CD8-positive, alpha-beta memory T cell (primary cell): ENCODE measurements at regions of chr20 and their contacts with region 1.

Region 1: GRCh38 chr20:53865901-53866794 is 204.2 kb downstream of the BCAS1 start:
- DNase-seq: no peak
- H3K4me3 ChIP-seq: peak overlapping the region; percentile 46
- H3K4me3 Mint-ChIP-seq: peak overlapping the region; percentile 4 to 80 (median 68)
- H3K27ac ChIP-seq: no peak overlapping the region
- H3K27ac Mint-ChIP-seq: peak overlapping the region; percentile 70 to 96 (median 90)
- H3K4me1 ChIP-seq: peaks cover 55% of the 10 kb centered on the region
- H3K4me1 Mint-ChIP-seq: peaks cover 45 to 70% (median 67%) of the 10 kb centered on the region in 3 donors
- H3K27me3 ChIP-seq: no peaks in the 10 kb centered on the region
- H3K27me3 Mint-ChIP-seq: no peaks in the 10 kb centered on the region

Region 2: DNA sequence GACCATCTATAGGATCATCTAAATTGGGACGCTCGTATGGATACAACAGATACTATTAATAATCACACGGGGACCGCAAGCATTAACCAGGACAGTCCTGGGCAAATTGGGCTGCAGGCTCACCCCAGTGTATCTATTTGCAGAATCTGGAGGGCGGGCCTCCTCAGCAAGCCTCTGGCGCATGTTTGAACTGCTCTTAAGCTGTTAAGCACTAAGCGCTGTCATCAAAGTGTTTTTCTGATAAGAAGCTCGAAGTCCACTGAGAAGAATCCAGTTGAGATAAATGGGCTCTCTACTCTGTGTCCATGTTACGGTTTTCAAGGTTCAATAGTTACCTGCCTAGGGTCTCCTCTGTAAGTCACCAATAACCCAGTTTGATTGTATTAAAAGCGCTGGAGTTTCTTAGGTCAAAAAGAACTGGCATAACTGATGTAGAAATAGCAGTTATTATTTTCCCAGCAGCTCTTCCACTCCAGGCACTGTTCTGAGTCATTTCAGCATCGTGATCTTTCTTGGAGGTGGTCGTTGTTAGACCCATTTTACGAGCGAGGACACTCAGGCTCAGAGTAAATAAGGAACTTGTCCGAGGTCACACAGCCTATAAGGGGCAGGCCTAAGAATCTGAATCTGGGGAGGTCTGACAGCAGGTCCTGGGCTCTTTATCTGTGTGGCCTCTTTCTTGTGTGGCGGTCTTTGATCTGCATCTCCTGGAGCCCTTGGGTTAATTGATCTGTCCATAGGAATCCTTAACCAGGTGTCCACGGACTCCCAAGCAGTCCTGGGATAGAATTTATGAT is 65.1 kb before region 1 on chr20:
- CTCF ChIA-PET with region 1: no interaction called
- POLR2A ChIA-PET with region 1: no interaction called
- DNase-seq: no peak
- H3K4me3 ChIP-seq: no peak overlapping the region
- H3K4me3 Mint-ChIP-seq: no peak overlapping the region
- H3K27ac ChIP-seq: no peak overlapping the region
- H3K27ac Mint-ChIP-seq: peak overlapping the region in 2 of 8 donors; percentile 19 to 77
- H3K4me1 ChIP-seq: no peaks in the 10 kb centered on the region
- H3K4me1 Mint-ChIP-seq: no peaks in the 10 kb centered on the region
- H3K27me3 ChIP-seq: no peaks in the 10 kb centered on the region
- H3K27me3 Mint-ChIP-seq: no peaks in the 10 kb centered on the region

Region 3: GRCh38 chr20:53839423-53840176 is 26.5 kb before region 1 on chr20:
- CTCF ChIA-PET with region 1: interaction called, 11 read pairs
- POLR2A ChIA-PET with region 1: interaction called, 5 read pairs
- DNase-seq: peak; percentile 39 to 86 (median 75)
- H3K4me3 ChIP-seq: no peak overlapping the region
- H3K4me3 Mint-ChIP-seq: peak overlapping the region; percentile 28 to 89 (median 75)
- H3K27ac ChIP-seq: no peak overlapping the region
- H3K27ac Mint-ChIP-seq: peak overlapping the region; percentile 87 to 100 (median 97)
- H3K4me1 ChIP-seq: peaks cover 87% of the 10 kb centered on the region
- H3K4me1 Mint-ChIP-seq: peaks cover 68 to 86% (median 85%) of the 10 kb centered on the region in 3 donors
- H3K27me3 ChIP-seq: no peaks in the 10 kb centered on the region
- H3K27me3 Mint-ChIP-seq: no peaks in the 10 kb centered on the region

Region 4: GRCh38 chr20:53974785-53975555 is 108.8 kb after region 1 on chr20:
- CTCF ChIA-PET with region 1: no interaction called
- POLR2A ChIA-PET with region 1: no interaction called
- DNase-seq: no peak
- H3K4me3 ChIP-seq: no peak overlapping the region
- H3K4me3 Mint-ChIP-seq: no peak overlapping the region
- H3K27ac ChIP-seq: no peak overlapping the region
- H3K27ac Mint-ChIP-seq: no peak overlapping the region
- H3K4me1 ChIP-seq: no peaks in the 10 kb centered on the region
- H3K4me1 Mint-ChIP-seq: no peaks in the 10 kb centered on the region
- H3K27me3 ChIP-seq: no peaks in the 10 kb centered on the region
- H3K27me3 Mint-ChIP-seq: peaks cover 2 to 15% of the 10 kb centered on the region in 2 donors